ENCODE measurements at regions of chr18 and their contacts with region 1.

Region 1: GRCh38 chr18:8381821-8382459 is 227.3 kb upstream of the RAB12 start:
- DNase-seq: no peak
- ATAC-seq: no peak
- H3K4me3 Mint-ChIP-seq: no peak overlapping the region
- H3K27ac Mint-ChIP-seq: no peak overlapping the region
- H3K4me1 Mint-ChIP-seq: no peaks in the 10 kb centered on the region
- H3K27me3 Mint-ChIP-seq: no peaks in the 10 kb centered on the region

Region 2: GRCh38 chr18:8333961-8334360 is 48.0 kb before region 1 on chr18:
- CTCF ChIA-PET with region 1: no interaction called
- POLR2A ChIA-PET with region 1: no interaction called
- intact Hi-C with region 1: loop called in 1 of 2 experiments (anchors 5 kb)
- DNase-seq: no peak
- ATAC-seq: no peak
- H3K4me3 Mint-ChIP-seq: no peak overlapping the region
- H3K27ac Mint-ChIP-seq: no peak overlapping the region
- H3K4me1 Mint-ChIP-seq: no peaks in the 10 kb centered on the region
- H3K27me3 Mint-ChIP-seq: no peaks in the 10 kb centered on the region

Region 3: DNA sequence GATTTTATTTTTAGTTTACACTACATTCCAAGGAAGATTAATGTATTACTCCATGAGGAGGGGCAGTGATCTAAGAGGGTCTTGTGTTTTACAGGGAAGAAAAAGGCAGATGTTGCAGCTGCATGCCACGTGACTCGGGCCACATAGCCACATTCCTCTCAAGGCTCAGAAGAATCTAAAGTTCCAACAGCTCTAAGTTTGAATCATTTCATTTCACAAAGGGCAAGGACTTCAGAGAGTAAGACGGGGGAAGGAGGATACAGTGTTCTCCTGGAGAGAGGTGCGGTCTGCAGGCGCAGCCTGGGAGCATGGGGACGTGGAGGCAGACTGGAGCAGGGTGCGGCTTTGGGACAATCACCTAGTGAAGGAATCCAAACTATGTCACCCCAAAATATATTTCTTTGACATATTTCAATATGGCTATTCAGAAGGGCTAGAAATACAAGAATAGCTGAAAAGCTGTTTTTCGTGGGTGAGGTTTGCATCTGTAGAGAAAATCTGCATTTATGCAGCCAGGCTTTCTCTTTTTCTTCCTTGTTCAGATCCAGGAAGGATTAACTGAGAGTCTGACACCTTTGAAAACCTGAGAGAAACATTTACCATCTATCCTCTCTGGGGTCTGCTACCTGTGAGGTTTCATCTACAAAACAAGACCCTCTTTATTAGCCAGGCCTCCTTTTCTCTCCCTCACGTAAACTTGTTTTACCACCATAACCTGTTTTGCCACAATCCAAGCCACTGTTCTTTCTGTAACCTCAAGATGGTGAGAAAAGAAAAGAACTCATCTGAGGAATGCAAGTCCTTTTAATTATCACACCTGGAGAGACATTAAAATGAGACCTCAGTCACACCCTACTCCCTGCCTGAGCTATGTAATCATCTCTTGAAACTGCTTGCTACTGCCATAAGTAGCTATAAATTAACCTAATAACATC is 555.5 kb after region 1 on chr18:
- CTCF ChIA-PET with region 1: no interaction called
- POLR2A ChIA-PET with region 1: no interaction called
- intact Hi-C with region 1: no loop called
- DNase-seq: no peak
- ATAC-seq: no peak
- H3K4me3 Mint-ChIP-seq: no peak overlapping the region
- H3K27ac Mint-ChIP-seq: no peak overlapping the region
- H3K4me1 Mint-ChIP-seq: no peaks in the 10 kb centered on the region
- H3K27me3 Mint-ChIP-seq: peaks cover 4% of the 10 kb centered on the region

Measured in activated CD4-positive, alpha-beta T cell treated with anti-CD3 and anti-CD28 coated beads for 36 hours (primary cell).